Mammary epithelial cell (primary cell): ENCODE measurements at regions of chr7 and their contacts with region 1.

Region 1: DNA sequence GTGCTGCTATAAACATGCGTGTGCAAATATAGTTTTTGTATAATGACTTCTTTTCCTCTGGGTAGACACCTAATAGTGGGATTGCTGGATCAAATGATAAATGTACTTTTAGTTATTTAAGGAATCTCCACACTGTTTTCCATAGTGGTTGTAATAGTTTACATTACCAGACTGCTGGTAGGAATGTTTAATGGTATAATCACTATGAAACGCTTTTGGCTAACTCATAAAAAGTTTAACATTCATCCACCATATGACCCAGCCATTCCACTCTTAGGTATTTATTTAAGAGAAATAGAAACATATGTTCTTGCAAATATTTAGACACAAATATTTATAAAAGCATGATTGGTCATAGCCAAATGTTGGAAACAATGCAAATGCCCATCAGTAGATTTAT is 32.1 kb upstream of the TFEC start:
- DNase-seq: no peak
- H3K4me3 ChIP-seq: no peak overlapping the region
- H3K27ac ChIP-seq: no peak overlapping the region
- H3K4me1 ChIP-seq: no peaks in the 10 kb centered on the region
- H3K27me3 ChIP-seq: no peaks in the 10 kb centered on the region
- CTCF ChIP-seq: no peak

Region 2: DNA sequence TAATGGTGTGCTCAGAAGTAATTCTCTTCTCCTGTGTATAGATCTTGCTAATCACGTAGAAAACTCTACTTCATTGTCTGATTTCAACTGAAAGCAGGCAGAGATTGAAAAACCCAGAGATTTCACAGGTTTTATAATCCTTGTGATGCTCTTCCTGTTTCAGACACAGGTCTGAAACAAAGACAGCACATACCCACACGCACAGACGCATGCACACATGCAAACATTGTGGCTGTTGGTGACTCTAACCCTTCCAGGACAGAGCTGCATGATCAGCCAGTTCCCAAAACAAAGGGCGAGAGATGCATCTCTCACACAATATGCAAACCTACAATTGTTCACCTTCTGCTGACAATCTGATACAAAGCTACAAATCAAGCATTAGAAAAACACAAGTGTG is 21.1 kb before region 1 on chr7:
- CTCF ChIA-PET with region 1: no interaction called
- dilution Hi-C with region 1: no loop called
- in situ Hi-C with region 1: no loop called
- intact Hi-C with region 1: loop called (anchors 2 kb)
- DNase-seq: no peak
- H3K4me3 ChIP-seq: no peak overlapping the region
- H3K27ac ChIP-seq: no peak overlapping the region
- H3K4me1 ChIP-seq: no peaks in the 10 kb centered on the region
- H3K27me3 ChIP-seq: peaks cover 2% of the 10 kb centered on the region
- CTCF ChIP-seq: no peak

Region 3: GRCh38 chr7:116173051-116174028 is 110.7 kb after region 1 on chr7:
- CTCF ChIA-PET with region 1: no interaction called
- dilution Hi-C with region 1: no loop called
- in situ Hi-C with region 1: no loop called
- intact Hi-C with region 1: no loop called
- DNase-seq: peak; percentile 54
- H3K4me3 ChIP-seq: no peak overlapping the region
- H3K27ac ChIP-seq: no peak overlapping the region
- H3K4me1 ChIP-seq: peaks cover 25% of the 10 kb centered on the region
- H3K27me3 ChIP-seq: no peaks in the 10 kb centered on the region
- CTCF ChIP-seq: peak; percentile 35 to 46

Region 4: GRCh38 chr7:116802746-116803152 is 740.1 kb after region 1 on chr7:
- CTCF ChIA-PET with region 1: no interaction called
- dilution Hi-C with region 1: no loop called
- in situ Hi-C with region 1: no loop called
- intact Hi-C with region 1: no loop called
- DNase-seq: peak; percentile 80
- H3K4me3 ChIP-seq: no peak overlapping the region
- H3K27ac ChIP-seq: peak overlapping the region; percentile 89
- H3K4me1 ChIP-seq: peaks cover 31% of the 10 kb centered on the region
- H3K27me3 ChIP-seq: no peaks in the 10 kb centered on the region
- CTCF ChIP-seq: peak; percentile 57 to 65